ENCODE measurements at regions of chr6 and their contacts with region 1.

Region 1: GRCh38 chr6:21342501-21342900 is 251.1 kb upstream of the SOX4 start:
- DNase-seq: no peak
- H3K4me3 ChIP-seq: no peak overlapping the region; a peak in 1 of 8 replicates
- H3K27ac ChIP-seq: no peak overlapping the region
- H3K4me1 ChIP-seq: no peaks in the 10 kb centered on the region
- H3K27me3 ChIP-seq: no peaks in the 10 kb centered on the region
- CTCF ChIP-seq: no peak
- EP300 ChIP-seq: no peak
- POLR2A ChIP-seq: no peak
- RAD21 ChIP-seq: no peak

Region 2: DNA sequence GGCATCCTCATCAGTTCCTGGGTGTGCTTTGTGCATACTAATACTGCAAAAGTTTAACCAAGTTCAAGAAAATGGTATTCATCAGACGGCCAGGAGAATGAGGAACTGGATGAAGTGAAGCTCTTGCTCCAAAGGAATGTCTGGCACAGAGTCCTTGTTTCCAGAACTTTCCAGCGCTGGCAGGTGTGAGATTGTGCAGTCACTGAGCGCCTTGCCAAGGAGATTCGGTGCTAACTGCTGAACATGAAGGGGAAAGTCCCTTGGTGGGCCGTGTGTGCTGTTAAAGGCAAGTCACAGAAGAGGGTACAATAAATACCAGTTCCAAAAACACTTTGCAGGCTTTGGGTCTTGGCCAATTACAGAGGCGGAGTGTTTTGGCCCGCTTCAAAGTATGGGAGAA is 11.3 kb before region 1 on chr6:
- CTCF ChIA-PET with region 1: interaction called, 10 read pairs
- POLR2A ChIA-PET with region 1: no interaction called
- DNase-seq: no peak
- H3K4me3 ChIP-seq: no peak overlapping the region
- H3K27ac ChIP-seq: no peak overlapping the region
- H3K4me1 ChIP-seq: peaks cover 0 to 10% (median 0%) of the 10 kb centered on the region in 4 experiments; a peak in 3 of 7 replicates
- H3K27me3 ChIP-seq: no peaks in the 10 kb centered on the region
- CTCF ChIP-seq: no peak
- EP300 ChIP-seq: no peak
- POLR2A ChIP-seq: no peak
- RAD21 ChIP-seq: no peak